Endothelial cell of umbilical vein (primary cell): ENCODE measurements at regions of chr1 and their contacts with region 1.

Region 1: GRCh38 chr1:30801771-30802198 is 44.2 kb upstream of the LAPTM5 start:
- DNase-seq: peak; percentile 59
- H3K4me3 ChIP-seq: no peak overlapping the region
- H3K27ac ChIP-seq: no peak overlapping the region
- H3K4me1 ChIP-seq: peaks cover 2% of the 10 kb centered on the region
- H3K27me3 ChIP-seq: peaks cover 12 to 18% of the 10 kb centered on the region in 2 experiments
- CTCF ChIP-seq: peak; percentile 88 to 94
- POLR2A ChIP-seq: no peak

Region 2: DNA sequence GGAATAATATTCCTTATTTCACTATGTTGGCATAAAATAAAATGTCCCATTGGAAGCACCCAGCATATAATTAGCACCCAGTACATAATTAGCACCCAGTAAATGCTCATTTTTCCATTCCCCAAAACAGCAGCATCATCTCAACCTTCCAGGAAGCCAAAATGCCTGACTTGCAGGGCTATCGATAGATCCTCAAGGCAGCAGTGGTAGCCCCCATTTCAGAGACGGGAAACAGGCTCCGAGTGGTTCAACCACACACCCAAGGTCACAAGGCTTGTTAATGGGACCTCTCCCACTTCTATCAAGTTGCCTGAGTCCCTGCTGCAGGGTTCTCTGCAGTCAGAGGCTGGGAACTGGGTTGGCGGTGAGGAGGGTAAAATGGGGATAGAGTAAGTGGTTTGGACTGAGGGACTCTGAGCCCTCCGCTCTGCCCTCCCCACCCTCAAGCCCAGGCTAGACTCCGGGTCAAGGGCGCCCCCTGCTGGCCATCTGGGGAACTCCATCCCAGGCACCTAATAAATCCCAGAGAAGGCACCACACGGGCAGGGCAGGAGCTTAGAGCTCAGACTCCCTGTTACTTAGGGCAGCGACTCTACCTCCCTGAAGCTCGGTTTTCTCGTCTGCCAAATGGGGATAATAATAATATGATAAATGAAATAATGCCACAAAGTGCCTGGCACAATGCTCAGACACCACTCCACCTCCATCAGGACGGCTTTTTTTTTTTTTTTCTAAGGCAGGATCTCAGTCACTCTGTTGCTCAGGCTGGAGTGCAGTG is 22.3 kb before region 1 on chr1:
- CTCF ChIA-PET with region 1: interaction called, 40 read pairs
- POLR2A ChIA-PET with region 1: no interaction called
- dilution Hi-C with region 1: no loop called
- intact Hi-C with region 1: loop called (anchors 1 kb)
- DNase-seq: peak; percentile 78
- H3K4me3 ChIP-seq: no peak overlapping the region
- H3K27ac ChIP-seq: no peak overlapping the region
- H3K4me1 ChIP-seq: peaks cover 7% of the 10 kb centered on the region
- H3K27me3 ChIP-seq: peaks cover 0 to 3% of the 10 kb centered on the region in 2 experiments
- CTCF ChIP-seq: peak; percentile 90 to 93
- POLR2A ChIP-seq: no peak

Region 3: DNA sequence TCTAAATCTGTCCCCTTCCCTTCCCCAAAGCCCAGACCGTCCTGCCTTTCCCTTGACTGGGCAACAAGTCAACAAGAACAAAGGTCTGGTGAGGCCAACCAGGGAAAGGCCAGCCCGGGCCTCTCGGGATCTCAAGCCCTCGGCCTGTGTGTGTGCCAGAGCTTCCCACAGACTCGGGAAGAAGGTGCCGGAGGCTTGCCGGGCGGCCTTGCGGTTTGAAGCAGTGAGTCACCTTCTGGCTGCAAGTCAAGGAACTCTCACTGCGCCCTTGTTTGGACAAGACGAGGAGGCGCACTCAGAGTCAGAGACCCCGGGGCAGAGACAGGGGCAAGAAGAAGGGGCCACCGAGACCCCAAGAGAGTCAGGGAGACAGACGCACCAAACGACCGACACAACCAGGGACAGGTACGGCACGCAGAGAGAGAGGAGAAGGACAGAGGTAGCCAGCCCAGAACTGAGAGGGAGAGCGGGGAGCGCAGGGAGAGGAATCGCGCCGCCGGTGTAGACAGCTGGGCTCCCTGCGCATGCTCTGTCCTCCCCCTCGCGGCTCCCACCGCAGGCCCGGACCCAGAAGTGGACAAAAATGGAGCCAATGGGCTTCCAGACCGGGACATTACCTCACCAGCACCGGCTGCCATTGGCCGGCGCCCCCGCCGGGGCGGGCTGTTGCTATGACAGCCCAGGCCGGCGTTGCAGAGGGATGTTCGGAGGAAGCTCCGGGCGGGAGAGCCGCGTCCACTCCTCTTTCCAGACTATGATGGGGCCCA is 22.4 kb after region 1 on chr1:
- CTCF ChIA-PET with region 1: interaction called, 47 read pairs
- POLR2A ChIA-PET with region 1: interaction called, 3 read pairs
- dilution Hi-C with region 1: no loop called
- intact Hi-C with region 1: no loop called
- DNase-seq: peak; percentile 98
- H3K4me3 ChIP-seq: peak overlapping the region in 2 of 3 experiments; percentile 39 to 40
- H3K27ac ChIP-seq: peak overlapping the region; percentile 80
- H3K4me1 ChIP-seq: peaks cover 10% of the 10 kb centered on the region
- H3K27me3 ChIP-seq: peaks cover 27% of the 10 kb centered on the region in 2 experiments
- CTCF ChIP-seq: no peak
- POLR2A ChIP-seq: peak; percentile 73

Region 4: GRCh38 chr1:30856260-30856790 is 54.5 kb after region 1 on chr1:
- CTCF ChIA-PET with region 1: interaction called, 32 read pairs
- POLR2A ChIA-PET with region 1: no interaction called
- dilution Hi-C with region 1: no loop called
- intact Hi-C with region 1: loop called (anchors 1 kb)
- DNase-seq: no peak
- H3K4me3 ChIP-seq: no peak overlapping the region
- H3K27ac ChIP-seq: no peak overlapping the region
- H3K4me1 ChIP-seq: peaks cover 3% of the 10 kb centered on the region
- H3K27me3 ChIP-seq: peaks cover 8 to 9% of the 10 kb centered on the region in 2 experiments
- CTCF ChIP-seq: peak in 1 of 2 donors; percentile 13
- POLR2A ChIP-seq: no peak

Region 5: GRCh38 chr1:30911046-30911954 is 109.5 kb after region 1 on chr1:
- CTCF ChIA-PET with region 1: interaction called, 528 read pairs
- POLR2A ChIA-PET with region 1: no interaction called
- dilution Hi-C with region 1: loop called (anchors 25 kb)
- intact Hi-C with region 1: loop called (anchors 1 kb)
- DNase-seq: peak; percentile 75
- H3K4me3 ChIP-seq: no peak overlapping the region
- H3K27ac ChIP-seq: no peak overlapping the region
- H3K4me1 ChIP-seq: peaks cover 6% of the 10 kb centered on the region
- H3K27me3 ChIP-seq: no peaks in the 10 kb centered on the region
- CTCF ChIP-seq: peak; percentile 81 to 88
- POLR2A ChIP-seq: no peak